ENCODE measurements at regions of chr12 and their contacts with region 1.

Region 1: GRCh38 chr12:67161322-67161918 is 107.7 kb upstream of the CAND1 start:
- DNase-seq: no peak
- H3K4me3 ChIP-seq: no peak overlapping the region
- CTCF ChIP-seq: no peak
- POLR2A ChIP-seq: no peak

Region 2: GRCh38 chr12:66910366-66910974 is 250.9 kb before region 1 on chr12:
- intact Hi-C with region 1: loop called (anchors 5 kb)
- DNase-seq: no peak
- H3K4me3 ChIP-seq: no peak overlapping the region
- CTCF ChIP-seq: no peak
- POLR2A ChIP-seq: no peak